ENCODE measurements at regions of chr5 and their contacts with region 1.

Region 1: DNA sequence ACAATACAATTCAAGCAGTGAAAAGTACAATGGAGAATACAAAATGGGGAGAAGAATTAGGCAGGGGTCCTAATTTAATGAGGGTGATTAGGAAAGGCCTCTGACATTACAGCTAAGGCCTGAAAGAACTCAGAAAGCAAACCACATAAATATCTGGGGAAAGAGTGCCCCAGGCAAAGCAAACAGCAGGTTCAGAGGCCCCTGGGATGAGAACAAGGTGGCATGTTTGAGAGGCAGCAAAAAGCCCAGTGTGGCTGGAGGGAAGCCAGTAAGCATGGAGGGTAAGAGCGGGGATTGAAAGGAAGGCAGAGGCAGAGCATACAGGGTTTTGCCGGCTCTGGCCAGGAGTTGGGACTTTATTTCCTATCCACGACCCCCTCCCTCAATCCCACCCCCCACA is 33.4 kb upstream of the VDAC1 start:
- DNase-seq: no peak
- H3K4me3 ChIP-seq: no peak overlapping the region
- CTCF ChIP-seq: no peak
- POLR2A ChIP-seq: no peak

Region 2: GRCh38 chr5:134092878-134093277 is 54.7 kb after region 1 on chr5:
- intact Hi-C with region 1: loop called (anchors 10 kb)
- DNase-seq: no peak
- H3K4me3 ChIP-seq: no peak overlapping the region
- CTCF ChIP-seq: no peak
- POLR2A ChIP-seq: no peak

Region 3: DNA sequence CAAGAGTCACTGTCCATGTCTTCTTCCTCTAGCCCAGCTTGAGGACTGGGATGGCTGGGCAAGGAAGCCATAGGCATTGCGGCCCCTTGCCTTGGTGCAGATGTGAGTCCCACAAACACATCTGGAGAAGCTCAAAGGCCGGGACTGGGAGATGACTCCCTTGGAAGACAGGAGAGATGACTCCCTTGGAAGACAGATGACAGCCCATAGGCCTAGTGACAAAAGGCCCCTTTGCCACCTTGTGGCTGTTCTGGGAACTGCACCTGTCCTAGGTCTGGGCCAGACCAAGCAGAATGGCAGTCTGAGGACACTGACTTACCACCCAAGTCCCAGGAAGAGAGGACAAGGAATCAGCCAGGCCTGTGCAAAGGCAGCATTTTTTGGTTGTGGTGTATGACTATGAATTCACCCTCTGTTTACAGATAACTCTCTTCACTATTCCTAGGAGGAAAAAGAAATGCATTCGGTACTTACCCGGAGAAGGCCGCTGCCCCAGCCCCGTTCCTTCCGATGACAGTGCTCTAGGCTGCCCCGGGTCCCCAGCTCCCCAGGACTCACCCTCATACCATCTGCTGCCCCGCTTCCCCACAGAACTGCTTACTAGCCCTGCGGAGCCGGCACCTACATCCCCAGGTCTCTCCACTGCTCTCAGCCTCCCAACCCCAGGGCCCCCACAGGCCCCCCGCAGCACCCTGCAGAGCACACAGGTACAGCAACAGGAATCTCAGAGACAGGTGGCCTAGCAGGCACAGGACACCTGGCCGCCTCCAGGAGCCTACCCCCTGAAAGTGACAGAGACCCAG is 107.8 kb after region 1 on chr5:
- intact Hi-C with region 1: loop called (anchors 2 kb)
- DNase-seq: peak; percentile 72 to 94
- H3K4me3 ChIP-seq: no peak overlapping the region
- CTCF ChIP-seq: peak in 1 of 3 donors; percentile 81
- POLR2A ChIP-seq: no peak